Mammary epithelial cell (primary cell): ENCODE measurements at regions of chr3 and their contacts with region 1.

Region 1: DNA sequence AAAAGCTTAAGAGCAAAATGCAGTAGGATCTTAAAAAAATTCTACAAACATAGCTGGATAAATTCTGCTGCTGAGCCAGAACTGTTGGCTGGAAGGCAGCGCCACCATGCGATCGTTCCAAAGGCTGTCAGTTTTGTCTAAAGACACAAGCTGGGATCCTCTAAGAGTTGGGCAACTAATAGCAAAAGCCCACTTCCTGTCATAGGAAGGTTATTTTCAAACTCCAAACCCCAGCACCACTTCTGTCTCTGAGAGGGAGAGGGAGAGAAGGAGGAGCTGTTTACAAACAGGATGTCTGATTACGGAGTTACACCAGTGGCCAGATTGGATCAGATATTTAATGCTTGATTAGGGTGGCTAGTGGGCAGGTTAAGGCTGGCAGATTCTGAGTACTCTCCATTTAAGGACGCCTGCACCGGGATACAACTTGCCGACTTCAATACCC is 44.0 kb downstream of the EIF4E3 start:
- DNase-seq: peak; percentile 75
- H3K4me3 ChIP-seq: peak overlapping the region; percentile 25 to 32 (median 32)
- H3K27ac ChIP-seq: peak overlapping the region; percentile 29
- H3K4me1 ChIP-seq: peaks cover 43% of the 10 kb centered on the region
- H3K27me3 ChIP-seq: no peaks in the 10 kb centered on the region
- CTCF ChIP-seq: peak; percentile 92

Region 2: DNA sequence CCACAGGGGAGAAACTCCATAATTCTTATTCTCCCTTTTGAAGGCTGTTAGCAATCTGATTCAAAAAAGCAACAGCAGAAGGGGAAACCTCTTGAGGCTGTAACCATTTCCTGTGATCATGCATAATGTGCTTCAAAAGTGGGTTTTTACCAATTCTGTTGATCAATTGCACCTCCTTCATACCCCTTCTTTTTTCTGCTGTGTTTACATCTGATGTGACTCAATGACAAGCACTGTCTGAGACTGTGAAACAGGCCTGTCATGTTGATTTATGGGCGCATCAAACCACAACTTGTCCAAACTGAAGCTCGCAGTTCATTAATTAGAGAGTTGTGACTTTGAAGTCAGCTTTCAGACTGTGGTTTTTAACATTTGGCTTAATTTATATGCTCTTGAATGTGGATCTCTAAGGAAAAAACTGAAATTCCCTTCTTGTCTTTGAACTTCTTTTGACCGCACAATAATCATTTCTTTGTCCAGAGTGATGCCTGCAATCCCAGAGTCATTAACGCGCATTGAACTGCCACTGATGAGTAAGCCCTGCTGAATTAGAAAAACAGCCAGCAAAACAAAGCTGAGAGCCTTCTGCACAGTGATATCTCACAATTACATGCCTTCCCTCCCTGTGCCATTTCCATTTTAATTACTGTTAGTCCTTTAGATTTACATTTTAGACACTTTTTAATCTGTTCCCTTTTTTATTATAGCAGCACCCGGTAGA is 630.5 kb before region 1 on chr3:
- CTCF ChIA-PET with region 1: no interaction called
- dilution Hi-C with region 1: no loop called
- in situ Hi-C with region 1: no loop called
- intact Hi-C with region 1: loop called (anchors 10 kb)
- DNase-seq: peak; percentile 73
- H3K4me3 ChIP-seq: no peak overlapping the region
- H3K27ac ChIP-seq: no peak overlapping the region
- H3K4me1 ChIP-seq: peaks cover 35% of the 10 kb centered on the region
- H3K27me3 ChIP-seq: no peaks in the 10 kb centered on the region
- CTCF ChIP-seq: no peak

Region 3: DNA sequence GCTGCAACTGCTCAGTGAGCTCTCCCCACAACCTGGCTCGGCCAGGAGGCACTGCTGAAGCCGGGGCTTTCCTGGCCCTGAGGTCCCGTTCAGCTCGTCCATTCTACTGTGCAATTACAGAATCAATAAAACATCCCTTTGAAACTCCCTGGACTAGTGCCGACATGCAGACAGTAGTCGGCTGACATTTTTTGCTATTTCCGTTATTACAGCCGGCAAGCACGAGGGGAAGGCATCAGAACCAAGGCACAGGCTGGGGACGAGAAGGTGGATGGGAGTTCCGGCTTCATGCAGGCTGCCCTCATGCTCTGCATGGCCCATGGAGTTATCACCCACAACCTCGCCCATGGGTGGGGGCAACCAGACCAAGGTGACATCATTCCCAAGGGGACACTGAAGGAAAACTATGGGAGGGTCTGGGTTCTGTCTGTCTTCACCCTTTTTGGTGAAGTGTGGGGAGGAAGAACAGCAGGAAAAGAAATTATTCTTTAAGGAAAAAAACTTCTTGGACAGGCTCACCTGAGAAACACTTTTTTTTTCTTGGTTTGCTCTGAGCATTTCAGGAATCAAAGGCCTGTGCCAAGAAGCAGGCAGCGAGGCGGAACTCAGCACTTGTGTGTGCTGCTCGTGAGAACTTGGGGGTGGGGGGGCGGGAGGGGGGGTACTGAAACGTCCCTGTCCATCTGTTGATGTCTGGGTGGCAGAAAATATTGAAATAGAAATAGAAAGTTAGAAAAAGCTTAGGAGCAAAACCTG is 252.2 kb before region 1 on chr3:
- CTCF ChIA-PET with region 1: no interaction called
- dilution Hi-C with region 1: no loop called
- in situ Hi-C with region 1: no loop called
- intact Hi-C with region 1: loop called (anchors 10 kb)
- DNase-seq: peak; percentile 90
- H3K4me3 ChIP-seq: peak overlapping the region; percentile 18 to 30 (median 26)
- H3K27ac ChIP-seq: peak overlapping the region; percentile 92
- H3K4me1 ChIP-seq: peaks cover 63% of the 10 kb centered on the region
- H3K27me3 ChIP-seq: no peaks in the 10 kb centered on the region
- CTCF ChIP-seq: no peak

Region 4: DNA sequence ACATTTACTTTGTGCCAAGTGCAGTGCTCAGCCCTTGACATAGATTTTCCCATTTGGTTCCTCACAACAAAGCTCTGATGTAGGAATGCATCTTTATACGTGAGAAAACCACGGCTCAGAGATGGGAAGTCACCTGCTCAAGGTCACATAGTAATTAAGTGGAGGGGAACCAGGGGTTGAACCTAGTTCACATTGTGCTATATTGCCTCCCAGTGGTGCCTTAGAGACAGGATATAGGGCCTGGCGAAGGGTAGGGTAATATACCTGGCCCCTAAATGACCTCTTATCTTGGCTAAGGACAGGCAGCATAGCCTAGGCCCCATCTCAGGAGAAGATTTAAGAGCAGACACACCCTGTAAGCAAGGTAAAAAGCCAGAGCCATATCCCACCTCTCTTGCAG is 169.2 kb before region 1 on chr3:
- CTCF ChIA-PET with region 1: no interaction called
- dilution Hi-C with region 1: no loop called
- in situ Hi-C with region 1: no loop called
- intact Hi-C with region 1: loop called (anchors 10 kb)
- DNase-seq: no peak
- H3K4me3 ChIP-seq: no peak overlapping the region
- H3K27ac ChIP-seq: no peak overlapping the region
- H3K4me1 ChIP-seq: peaks cover 37% of the 10 kb centered on the region
- H3K27me3 ChIP-seq: no peaks in the 10 kb centered on the region
- CTCF ChIP-seq: peak in 1 of 2 donors; percentile 13

Region 5: DNA sequence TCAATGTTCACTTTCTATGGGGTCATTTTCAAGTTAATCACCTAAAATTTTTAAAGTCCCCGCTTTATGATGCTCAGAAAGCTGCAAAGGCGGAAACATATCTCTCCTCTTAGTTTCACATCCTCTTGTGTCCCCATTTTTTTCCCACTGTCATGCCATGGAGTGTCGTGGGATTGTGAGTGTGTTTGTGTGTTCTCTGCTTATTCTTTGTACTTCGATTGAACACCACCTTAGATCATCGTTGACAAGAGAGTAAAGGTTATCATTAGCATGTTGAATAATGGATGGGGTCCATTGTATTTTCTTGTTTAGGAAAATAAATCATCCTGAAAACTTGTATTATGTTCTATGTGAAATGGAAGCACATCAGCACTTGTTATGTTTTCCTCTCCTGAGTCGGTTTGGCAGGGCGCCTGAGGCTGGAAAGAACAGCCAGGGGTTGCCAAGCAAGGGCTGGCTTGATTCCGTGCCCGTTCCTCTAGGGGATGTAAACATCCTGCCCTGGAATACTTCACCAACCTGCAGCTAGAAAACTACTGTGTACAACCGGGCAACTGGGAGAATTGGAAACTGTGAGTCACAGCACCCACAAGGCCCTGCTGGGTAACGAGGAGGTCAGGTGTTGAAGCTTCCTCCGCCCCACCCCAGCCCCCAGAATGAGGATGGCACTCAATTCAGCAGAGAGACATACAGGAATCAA is 23.3 kb before region 1 on chr3:
- CTCF ChIA-PET with region 1: no interaction called
- dilution Hi-C with region 1: no loop called
- in situ Hi-C with region 1: no loop called
- intact Hi-C with region 1: loop called (anchors 2 kb)
- DNase-seq: peak; percentile 86
- H3K4me3 ChIP-seq: no peak overlapping the region
- H3K27ac ChIP-seq: peak overlapping the region; percentile 26
- H3K4me1 ChIP-seq: peaks cover 11% of the 10 kb centered on the region
- H3K27me3 ChIP-seq: no peaks in the 10 kb centered on the region
- CTCF ChIP-seq: peak in 1 of 2 donors; percentile 11